Astrocyte of the cerebellum (primary cell): ENCODE measurements at regions of chr2 and their contacts with region 1.

Region 1: DNA sequence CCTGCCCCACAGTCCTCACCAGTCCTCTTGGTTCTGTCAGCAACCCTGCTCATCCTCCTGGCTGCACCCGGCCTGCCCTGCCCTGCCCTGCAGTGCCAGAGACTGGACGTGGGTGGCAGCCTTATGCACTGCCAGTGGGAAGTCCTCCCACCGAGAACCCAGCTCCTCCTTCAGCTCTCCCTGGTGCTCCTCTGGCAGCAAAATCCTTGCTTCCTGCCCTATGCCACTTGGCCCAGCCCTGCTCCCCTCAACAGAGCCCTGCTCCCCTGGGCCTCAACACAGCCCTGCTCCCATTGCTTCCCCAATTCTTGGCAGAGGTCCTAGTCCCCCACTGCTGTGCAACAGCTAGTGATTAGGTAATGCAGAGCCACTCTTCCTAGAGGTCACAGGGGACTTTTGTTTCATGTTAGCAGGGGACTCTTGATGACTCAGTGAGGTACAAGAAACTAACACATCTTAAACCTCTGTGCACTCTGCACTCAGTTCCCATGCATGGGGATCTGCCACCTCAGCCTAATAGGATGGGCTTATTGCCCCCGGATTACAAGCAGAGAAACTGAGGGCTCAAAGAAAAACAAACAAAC is 58.0 kb upstream of the EDAR start:
- DNase-seq: no peak
- H3K4me3 ChIP-seq: no peak overlapping the region
- CTCF ChIP-seq: no peak

Region 2: GRCh38 chr2:108971661-108972566 is 75.1 kb before region 1 on chr2:
- in situ Hi-C with region 1: no loop called
- DNase-seq: no peak
- H3K4me3 ChIP-seq: no peak overlapping the region
- CTCF ChIP-seq: no peak

Region 3: DNA sequence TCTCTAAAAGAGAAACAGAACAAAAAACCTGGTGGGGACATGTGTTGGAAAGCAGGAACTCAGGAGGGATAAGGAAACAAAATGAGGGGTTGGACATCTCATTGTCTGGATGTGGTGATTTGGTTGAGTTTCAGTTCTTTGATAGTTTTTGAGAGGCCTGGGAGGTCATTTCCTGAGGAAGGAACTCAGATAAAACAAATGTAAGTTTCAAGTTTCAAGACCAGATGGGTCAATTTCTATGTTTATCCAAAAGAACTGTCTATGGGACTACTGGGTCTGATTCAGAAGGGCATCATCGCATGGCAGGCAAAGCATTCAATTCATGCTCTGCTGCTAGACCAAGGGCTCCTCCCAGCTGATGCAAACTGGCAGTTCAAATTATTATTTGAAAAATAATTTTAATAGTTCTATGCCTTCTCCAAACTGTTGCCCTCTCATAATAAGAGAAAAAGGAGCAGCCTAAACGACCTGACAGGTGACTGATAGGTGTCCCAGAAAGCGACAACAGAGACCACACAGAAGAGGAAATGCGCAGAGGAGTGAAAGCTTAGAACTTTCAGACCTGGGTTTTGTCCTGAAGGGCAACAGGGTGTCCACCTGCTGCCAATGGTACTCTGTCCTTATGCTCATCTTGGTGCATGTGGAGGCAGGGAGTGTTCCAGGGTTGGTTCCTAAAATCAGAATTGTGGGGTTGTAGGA is 42.7 kb after region 1 on chr2:
- in situ Hi-C with region 1: loop called (anchors 5 kb)
- DNase-seq: no peak
- H3K4me3 ChIP-seq: no peak overlapping the region
- CTCF ChIP-seq: no peak